Activated naive CD4-positive, alpha-beta T cell treated with anti-CD3 and anti-CD28 coated beads for 36 hours (primary cell): ENCODE measurements at regions of chr17 and their contacts with region 1.

Region 1: GRCh38 chr17:73956669-73957465 is 246.6 kb upstream of the RPL38 start:
- DNase-seq: peak; percentile 67
- H3K4me3 Mint-ChIP-seq: no peak overlapping the region
- H3K27ac Mint-ChIP-seq: no peak overlapping the region
- H3K4me1 Mint-ChIP-seq: peaks cover 3% of the 10 kb centered on the region
- H3K27me3 Mint-ChIP-seq: peaks cover 3% of the 10 kb centered on the region

Region 2: DNA sequence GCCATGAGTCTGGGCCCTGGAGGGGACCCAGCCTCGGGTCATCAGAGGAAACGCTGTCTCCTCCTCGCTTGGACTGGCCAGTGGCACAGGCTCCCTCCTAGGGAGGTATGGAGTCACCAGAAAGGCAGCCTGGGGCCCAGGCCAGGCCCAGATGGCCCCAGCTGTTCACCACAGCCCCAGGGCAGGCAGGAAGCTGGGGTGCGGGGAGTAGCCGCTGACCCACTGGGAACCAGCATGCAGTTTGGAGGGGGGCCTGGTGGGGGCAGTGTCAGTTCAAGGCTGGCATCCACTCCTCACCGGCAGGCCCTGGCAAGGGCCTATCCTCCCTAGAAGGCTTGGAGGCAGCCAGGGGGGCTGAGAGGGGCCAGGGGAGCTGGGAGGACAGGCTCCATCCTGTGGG is 361.4 kb before region 1 on chr17:
- CTCF ChIA-PET with region 1: no interaction called
- intact Hi-C with region 1: loop called (anchors 10 kb)
- DNase-seq: peak; percentile 55
- H3K4me3 Mint-ChIP-seq: no peak overlapping the region
- H3K27ac Mint-ChIP-seq: no peak overlapping the region
- H3K4me1 Mint-ChIP-seq: peaks cover 43% of the 10 kb centered on the region
- H3K27me3 Mint-ChIP-seq: no peaks in the 10 kb centered on the region

Region 3: DNA sequence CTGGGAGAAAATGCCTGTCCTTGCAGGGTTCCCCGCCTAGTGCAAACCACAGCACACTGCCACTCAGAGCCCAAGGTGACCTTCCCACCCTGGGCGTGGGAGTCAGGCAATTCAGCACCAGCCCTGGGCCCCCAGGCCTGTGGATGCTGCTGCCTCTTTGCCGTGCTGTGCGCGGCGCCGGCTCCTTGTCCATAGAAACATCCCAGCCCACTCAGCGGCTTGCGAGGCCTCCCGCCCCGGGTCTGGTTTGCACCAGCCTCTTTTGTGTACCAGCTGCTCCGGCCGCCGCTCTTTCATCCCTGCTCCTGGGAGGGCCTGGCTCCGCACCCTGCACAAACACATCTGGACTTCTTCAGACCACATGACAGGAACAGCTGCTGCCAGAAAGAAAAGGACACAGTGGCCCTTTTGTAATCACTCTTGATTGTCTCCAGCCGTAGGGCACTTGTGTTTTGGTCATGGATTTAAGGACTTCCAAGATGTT is 237.2 kb before region 1 on chr17:
- CTCF ChIA-PET with region 1: no interaction called
- intact Hi-C with region 1: loop called (anchors 5 kb)
- DNase-seq: no peak
- H3K4me3 Mint-ChIP-seq: no peak overlapping the region
- H3K27ac Mint-ChIP-seq: no peak overlapping the region
- H3K4me1 Mint-ChIP-seq: peaks cover 42% of the 10 kb centered on the region
- H3K27me3 Mint-ChIP-seq: no peaks in the 10 kb centered on the region

Region 4: DNA sequence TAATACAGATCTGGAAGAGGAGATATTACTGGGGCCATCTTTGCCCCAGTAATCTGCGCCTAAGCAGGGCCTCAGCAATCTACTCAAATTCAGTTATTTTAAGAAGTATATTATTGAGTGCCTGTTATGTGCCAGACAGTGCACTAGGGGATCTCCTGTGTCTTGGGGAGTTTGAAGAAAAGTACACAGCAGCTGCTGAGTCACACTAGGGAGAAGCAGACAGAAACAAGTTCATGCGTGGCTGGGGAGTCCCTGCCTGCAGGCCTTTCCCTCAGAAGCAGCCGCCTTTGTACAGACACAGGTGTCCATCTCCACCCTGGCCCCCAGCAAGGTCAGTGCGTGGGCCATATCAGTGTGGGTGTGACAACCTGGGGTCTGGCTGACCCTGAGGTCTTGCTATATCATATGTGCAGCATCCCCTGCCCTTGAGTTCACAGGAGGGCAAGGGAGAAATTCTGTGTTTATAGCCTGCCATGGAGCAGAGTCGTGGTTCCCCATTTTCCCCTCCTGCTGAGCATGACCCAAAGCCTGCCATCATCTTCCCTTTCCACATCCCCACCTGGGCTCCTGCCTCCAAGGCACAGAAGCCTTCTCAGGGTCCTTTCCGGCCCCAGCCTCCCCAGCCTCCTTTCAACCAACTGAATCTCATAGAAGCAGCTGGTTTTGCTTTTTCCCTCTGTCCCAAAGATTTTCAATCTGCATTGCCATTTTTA is 82.7 kb before region 1 on chr17:
- CTCF ChIA-PET with region 1: no interaction called
- intact Hi-C with region 1: loop called (anchors 5 kb)
- DNase-seq: peak; percentile 54
- H3K4me3 Mint-ChIP-seq: no peak overlapping the region
- H3K27ac Mint-ChIP-seq: peak overlapping the region; percentile 20
- H3K4me1 Mint-ChIP-seq: peaks cover 3% of the 10 kb centered on the region
- H3K27me3 Mint-ChIP-seq: no peaks in the 10 kb centered on the region